ENCODE measurements at regions of chr15 and their contacts with region 1.

Region 1: GRCh38 chr15:98647774-98648653 is at the start of gene IGF1R:
- DNase-seq: peak; percentile 94
- H3K4me3 ChIP-seq: peak within 1 kb of the TSS; percentile 84
- H3K27ac ChIP-seq: peak within 1 kb of the TSS; percentile 71
- H3K4me1 ChIP-seq: peaks cover 27% of the 10 kb centered on the region
- CTCF ChIP-seq: 0 out of 2 replicates have a peak, but pooled peaks have one; percentile 6
- total RNA-seq, gene IGF1R: 26.5 and 27.6 TPM in 2 replicates

Region 2: GRCh38 chr15:98518823-98519561 is 129.0 kb before region 1 on chr15:
- CTCF ChIA-PET with region 1: no interaction called
- POLR2A ChIA-PET with region 1: interaction called, 4 read pairs
- intact Hi-C with region 1: loop called (anchors 2 kb)
- DNase-seq: peak; percentile 75
- H3K4me3 ChIP-seq: no peak overlapping the region
- H3K27ac ChIP-seq: no peak overlapping the region
- H3K4me1 ChIP-seq: no peaks in the 10 kb centered on the region
- CTCF ChIP-seq: peak; percentile 91

Region 3: DNA sequence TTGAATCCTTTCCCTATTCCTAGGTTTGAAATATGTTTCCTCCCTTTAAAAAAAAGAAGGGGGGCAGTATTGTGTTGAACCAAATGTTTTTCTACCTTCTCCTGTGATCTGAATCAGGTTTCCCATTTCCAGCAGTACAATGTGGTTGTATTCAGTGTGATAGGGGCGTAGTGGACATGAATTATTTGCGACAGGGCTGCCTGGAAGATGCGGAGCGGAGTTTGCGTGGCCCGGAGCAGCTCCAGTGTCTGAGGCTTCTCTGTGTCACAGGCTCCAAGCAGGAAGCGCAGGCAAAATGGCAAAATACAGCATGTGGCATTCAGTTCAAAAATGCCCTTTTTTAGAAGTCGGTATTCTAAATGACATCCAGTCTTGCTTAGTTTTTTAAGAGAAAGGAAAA is 205.1 kb after region 1 on chr15:
- CTCF ChIA-PET with region 1: no interaction called
- POLR2A ChIA-PET with region 1: interaction called, 4 read pairs
- intact Hi-C with region 1: loop called (anchors 1 kb)
- DNase-seq: peak; percentile 83
- H3K4me3 ChIP-seq: peak overlapping the region; percentile 73
- H3K27ac ChIP-seq: peak overlapping the region; percentile 34
- H3K4me1 ChIP-seq: peaks cover 25% of the 10 kb centered on the region
- CTCF ChIP-seq: no peak

Region 4: DNA sequence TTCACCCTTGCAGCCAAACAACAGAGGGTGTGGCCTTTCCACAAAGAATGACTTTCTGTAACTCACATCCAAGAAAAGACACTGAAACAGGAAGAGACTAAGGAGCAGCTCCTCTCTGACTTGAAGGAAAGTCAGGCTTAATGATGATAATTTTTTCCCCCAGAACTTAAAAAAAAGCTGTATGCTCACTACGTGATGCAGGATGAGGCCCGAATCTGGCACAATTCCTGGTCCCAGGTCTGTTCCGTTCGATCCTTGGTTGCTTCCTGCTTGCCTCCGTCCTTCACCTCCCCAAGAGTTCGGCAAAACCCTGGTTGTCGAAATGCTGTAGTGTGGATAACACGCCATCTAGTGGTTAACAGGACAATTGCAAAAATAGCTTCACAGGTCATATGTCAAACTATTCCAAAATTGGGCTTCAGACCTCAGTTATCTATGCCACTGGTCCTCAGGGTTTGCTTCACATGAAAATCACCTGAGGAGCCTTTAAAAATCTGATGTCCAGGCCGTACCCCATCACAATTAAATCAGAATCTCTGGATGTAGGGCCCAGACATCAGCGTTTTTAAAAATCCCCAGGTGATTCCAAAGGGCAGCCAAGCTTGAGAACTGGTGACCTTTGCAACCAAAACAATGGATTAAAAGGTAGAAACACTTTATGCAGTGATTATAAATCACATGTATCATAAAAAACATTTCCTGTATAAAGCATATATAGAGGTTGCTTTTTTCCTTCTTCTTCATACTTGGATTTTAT is 428.7 kb after region 1 on chr15:
- CTCF ChIA-PET with region 1: no interaction called
- POLR2A ChIA-PET with region 1: interaction called, 3 read pairs
- intact Hi-C with region 1: loop called (anchors 1 kb)
- DNase-seq: peak; percentile 84
- H3K4me3 ChIP-seq: peak overlapping the region; percentile 59
- H3K27ac ChIP-seq: no peak overlapping the region
- H3K4me1 ChIP-seq: peaks cover 8% of the 10 kb centered on the region
- CTCF ChIP-seq: peak; percentile 94

Region 5: GRCh38 chr15:100602064-100602822 is 1954.2 kb after region 1 on chr15 and contains the starts of genes ASB7 and LINS1:
- CTCF ChIA-PET with region 1: no interaction called
- POLR2A ChIA-PET with region 1: no interaction called
- intact Hi-C with region 1: loop called (anchors 5 kb)
- DNase-seq: peak; percentile 100
- H3K4me3 ChIP-seq: peak within 1 kb of the TSS; percentile 99
- H3K27ac ChIP-seq: peak within 1 kb of the TSS; percentile 59
- H3K4me1 ChIP-seq: peaks cover 20% of the 10 kb centered on the region
- CTCF ChIP-seq: no peak
- total RNA-seq, gene ASB7: 10.9 and 13.1 TPM in 2 replicates
- total RNA-seq, gene LINS1: 6.6 and 7.5 TPM in 2 replicates